ENCODE measurements at regions of chr2 and their contacts with region 1.

Region 1: DNA sequence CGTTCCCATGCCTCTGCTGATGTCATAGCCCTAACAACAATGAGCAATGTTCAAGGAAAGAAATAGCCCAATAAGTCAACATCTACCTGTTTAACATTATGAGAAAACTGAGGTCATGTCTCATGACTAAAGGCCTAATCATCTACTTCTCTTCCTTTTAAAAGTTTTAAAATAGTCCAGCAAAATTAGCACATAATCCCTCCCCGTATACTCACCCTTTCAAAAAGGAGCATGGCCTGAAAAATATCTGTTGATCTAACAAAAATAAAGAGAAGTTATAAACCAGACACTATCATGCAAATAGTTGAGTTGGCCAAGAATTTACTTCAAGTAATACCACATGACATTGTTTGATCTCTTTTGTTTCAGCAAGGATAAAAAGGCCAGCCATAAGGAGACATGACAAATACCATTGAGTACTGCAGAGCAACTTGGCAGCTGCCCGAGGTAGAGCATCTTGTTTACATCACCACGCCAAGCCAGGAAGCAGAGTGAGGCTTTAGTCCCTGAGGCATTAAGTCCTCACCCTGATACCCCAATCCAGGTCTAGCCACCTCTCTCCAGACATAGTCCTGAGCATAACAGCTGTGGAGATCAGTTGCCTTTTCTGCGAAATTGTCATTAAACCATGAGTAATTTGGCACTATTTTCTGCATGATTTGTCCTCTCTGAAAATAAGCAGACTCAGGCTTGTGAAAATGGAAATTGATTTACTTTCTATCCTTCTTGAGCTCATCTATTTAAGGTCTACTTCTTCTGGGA is 137.4 kb upstream of the ETAA1 start:
- DNase-seq: peak in 1 of 2 donors; percentile 64
- H3K4me3 ChIP-seq: no peak overlapping the region
- H3K27ac ChIP-seq: peak overlapping the region; percentile 83 to 90
- H3K4me1 ChIP-seq: peaks cover 0 to 12% of the 10 kb centered on the region in 2 donors
- H3K27me3 ChIP-seq: no peaks in the 10 kb centered on the region
- CTCF ChIP-seq: no peak

Region 2: DNA sequence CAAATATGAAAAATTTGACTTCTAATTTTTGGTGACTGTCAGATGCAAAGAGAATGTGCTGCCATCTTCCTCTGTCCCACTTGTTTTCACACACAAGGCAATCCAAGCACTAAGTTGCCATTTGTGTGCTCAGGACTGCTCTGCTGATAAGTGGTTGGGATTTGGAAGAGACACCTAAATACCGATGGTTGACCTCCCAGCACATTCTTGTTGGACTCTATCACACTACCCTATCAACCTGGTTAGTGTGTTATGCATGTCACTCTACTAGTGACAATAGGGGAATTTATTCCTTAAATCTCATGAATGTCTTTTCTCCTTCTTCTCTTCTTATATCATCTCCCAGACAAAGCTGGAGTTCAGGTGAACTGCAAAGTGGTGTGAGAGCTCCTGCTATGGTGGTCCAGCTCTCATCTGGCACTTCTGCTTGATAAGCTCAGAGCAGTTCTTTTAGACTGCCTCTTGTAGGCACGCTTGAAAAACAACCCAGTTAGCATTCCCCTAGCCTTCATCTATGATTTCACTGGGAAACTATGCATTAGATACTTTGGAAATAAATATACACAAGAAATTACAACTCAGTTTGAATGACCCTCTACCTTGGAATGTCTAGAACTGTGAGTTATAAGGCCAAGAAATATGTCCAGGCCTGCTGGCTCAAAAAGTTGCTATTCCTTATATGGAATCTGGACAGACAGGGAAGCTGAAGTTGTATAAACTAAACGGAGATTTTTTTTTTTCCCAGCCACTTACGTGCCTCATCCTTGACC is 420.0 kb before region 1 on chr2:
- intact Hi-C with region 1: loop called (anchors 10 kb)
- DNase-seq: peak in 1 of 2 donors; percentile 67
- H3K4me3 ChIP-seq: peak overlapping the region; percentile 14 to 30
- H3K27ac ChIP-seq: peak overlapping the region; percentile 58 to 80
- H3K4me1 ChIP-seq: peaks cover 0 to 6% of the 10 kb centered on the region in 2 donors
- H3K27me3 ChIP-seq: no peaks in the 10 kb centered on the region
- CTCF ChIP-seq: no peak

Region 3: DNA sequence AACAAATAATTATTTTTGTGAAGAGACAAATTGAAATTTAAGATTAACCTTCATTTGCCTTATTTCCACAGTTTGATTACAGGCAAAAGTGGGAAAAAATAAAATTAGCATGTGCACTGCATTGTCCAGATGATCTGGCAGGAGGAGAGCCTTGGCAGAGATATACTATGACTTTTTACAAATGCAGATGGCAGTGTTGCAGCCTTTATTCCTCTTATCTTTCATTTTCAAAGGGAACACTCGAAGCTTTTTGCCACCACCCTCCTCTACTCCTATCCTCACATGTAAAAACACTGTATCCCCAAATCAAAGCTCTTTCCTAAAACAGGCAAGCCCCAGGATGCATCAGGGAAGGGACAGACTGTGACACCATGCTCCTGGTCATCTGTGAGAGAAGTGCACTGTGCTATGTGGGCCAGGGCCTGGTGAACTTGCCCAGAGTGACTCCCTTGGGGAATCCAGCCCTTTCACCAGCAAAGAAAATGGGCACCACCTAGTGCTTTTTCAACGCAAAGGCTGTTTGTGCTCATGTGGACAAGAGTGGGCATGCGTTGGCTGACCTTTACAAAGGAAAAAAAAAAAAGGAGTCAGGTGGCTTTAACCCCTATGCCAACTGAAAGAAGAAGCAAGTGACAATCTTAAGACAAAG is 62.7 kb after region 1 on chr2:
- intact Hi-C with region 1: loop called (anchors 5 kb)
- DNase-seq: peak in 1 of 2 donors; percentile 77
- H3K4me3 ChIP-seq: peak overlapping the region in 1 of 2 donors; percentile 11
- H3K27ac ChIP-seq: peak overlapping the region; percentile 25 to 44
- H3K4me1 ChIP-seq: peaks cover 0 to 10% of the 10 kb centered on the region in 2 donors
- H3K27me3 ChIP-seq: no peaks in the 10 kb centered on the region
- CTCF ChIP-seq: peak; percentile 40 to 70 (median 61)

Region 4: GRCh38 chr2:67656875-67657274 is 397.1 kb after region 1 on chr2:
- intact Hi-C with region 1: loop called (anchors 5 kb)
- DNase-seq: no peak
- H3K4me3 ChIP-seq: no peak overlapping the region
- H3K27ac ChIP-seq: peak overlapping the region; percentile 33 to 50
- H3K4me1 ChIP-seq: peaks cover 0 to 13% of the 10 kb centered on the region in 2 donors
- H3K27me3 ChIP-seq: no peaks in the 10 kb centered on the region
- CTCF ChIP-seq: no peak

Region 5: GRCh38 chr2:67846370-67847070 is 586.8 kb after region 1 on chr2:
- intact Hi-C with region 1: loop called (anchors 5 kb)
- DNase-seq: peak; percentile 66 to 93
- H3K4me3 ChIP-seq: peak overlapping the region; percentile 18 to 44
- H3K27ac ChIP-seq: peak overlapping the region; percentile 26 to 35
- H3K4me1 ChIP-seq: peaks cover 0 to 2% of the 10 kb centered on the region in 2 donors
- H3K27me3 ChIP-seq: no peaks in the 10 kb centered on the region
- CTCF ChIP-seq: peak; percentile 53 to 84 (median 67)

Region 6: GRCh38 chr2:67917332-67918054 is 657.7 kb after region 1 on chr2:
- intact Hi-C with region 1: loop called (anchors 5 kb)
- DNase-seq: no peak
- H3K4me3 ChIP-seq: no peak overlapping the region
- H3K27ac ChIP-seq: peak overlapping the region; percentile 82 to 91
- H3K4me1 ChIP-seq: peaks cover 0 to 23% of the 10 kb centered on the region in 2 donors
- H3K27me3 ChIP-seq: no peaks in the 10 kb centered on the region
- CTCF ChIP-seq: no peak

Region 7: DNA sequence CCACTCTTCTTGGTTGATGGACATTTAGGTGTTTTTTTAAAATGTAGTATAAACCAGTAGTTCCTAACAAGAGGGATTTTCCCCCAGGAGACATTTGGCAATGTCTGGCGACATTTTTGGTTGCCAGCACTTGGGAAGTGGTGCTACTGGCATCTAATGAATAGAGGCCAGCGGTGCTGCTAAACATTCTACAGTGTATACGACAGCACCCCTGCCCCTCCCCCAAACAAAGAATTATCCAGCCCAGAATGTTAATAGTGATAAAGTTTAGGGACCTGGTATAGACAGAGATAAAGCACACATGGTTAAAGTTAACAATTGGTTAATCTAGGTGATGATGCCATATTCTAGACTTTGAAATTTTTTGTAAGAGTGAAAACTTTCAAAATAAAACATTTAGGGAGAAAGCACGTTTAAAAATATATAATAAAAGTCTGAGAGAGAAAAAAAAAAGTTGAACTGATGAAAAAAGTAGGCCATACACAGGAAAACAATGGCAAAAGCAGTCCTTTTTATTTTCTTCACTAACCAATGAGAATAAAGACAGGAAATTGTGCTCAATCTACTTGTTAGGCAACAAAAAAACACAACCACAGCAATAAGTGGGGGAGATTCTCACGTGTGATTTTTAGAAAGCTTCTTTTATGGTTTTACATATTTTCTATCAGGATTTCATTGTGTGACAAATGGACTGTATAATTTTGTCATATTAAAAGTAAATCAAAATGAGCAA is 1192.6 kb after region 1 on chr2:
- intact Hi-C with region 1: loop called (anchors 5 kb)
- DNase-seq: no peak
- H3K4me3 ChIP-seq: no peak overlapping the region
- H3K27ac ChIP-seq: peak overlapping the region in 1 of 2 donors; percentile 43
- H3K4me1 ChIP-seq: no peaks in the 10 kb centered on the region
- H3K27me3 ChIP-seq: no peaks in the 10 kb centered on the region
- CTCF ChIP-seq: no peak

Measured in ascending aorta (tissue), 2 donors.